Pancreas (tissue), 10 donors: ENCODE measurements at regions of chr7 and their contacts with region 1.

Region 1: DNA sequence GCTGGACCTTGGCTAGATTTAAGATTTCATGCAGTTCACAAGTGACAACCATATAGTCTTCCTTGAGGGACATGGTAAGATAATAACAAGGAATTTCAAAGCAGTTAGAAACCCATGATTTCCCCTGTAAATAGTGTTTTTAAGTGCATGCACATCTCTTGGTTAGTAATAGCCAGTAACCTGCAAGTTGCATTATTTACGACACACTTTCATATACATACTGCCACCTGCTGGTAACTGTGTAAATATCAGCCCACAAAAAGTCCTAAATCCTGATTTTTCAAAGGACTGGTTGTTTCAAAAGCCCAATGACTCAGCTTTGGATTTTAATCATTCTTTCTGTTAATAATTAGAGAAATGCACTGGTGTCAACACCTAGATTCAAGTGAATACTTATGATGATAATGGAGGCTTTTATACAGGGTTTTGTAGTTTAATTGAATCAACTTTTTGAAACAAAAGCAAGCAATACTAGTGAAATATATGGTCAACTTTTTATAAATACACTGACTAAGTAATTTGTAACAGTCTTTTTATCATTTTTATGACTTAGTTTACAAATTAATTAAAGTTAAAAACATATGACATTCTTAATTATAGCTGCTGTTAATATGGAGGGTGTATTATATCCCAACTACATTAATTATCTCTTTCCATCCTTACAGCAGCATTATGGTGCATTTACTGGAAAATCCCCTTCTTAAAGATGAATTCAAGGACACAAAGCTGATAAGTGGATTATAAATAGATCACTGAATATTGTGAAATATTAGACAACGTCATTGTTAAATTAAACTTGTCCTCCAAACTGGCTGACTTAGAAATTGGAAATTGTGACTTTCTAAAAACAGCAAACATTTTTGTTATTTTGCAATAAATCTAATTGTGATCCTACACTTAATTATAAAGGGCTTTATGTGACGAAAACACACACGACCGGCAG is 367.7 kb upstream of the SEMA3D start:
- DNase-seq: peak in 3 of 6 donors; percentile 6 to 36 (median 11)
- ATAC-seq: peak; percentile 61 to 95 (median 89)
- H3K4me3 ChIP-seq: no peak overlapping the region
- H3K27ac ChIP-seq: peak overlapping the region in 1 of 4 donors; percentile 3
- H3K4me1 ChIP-seq: no peaks in the 10 kb centered on the region
- H3K27me3 ChIP-seq: no peaks in the 10 kb centered on the region
- CTCF ChIP-seq: peak; percentile 56 to 70 (median 62)

Region 2: GRCh38 chr7:85030893-85031292 is 523.6 kb before region 1 on chr7:
- intact Hi-C with region 1: loop called in 1 of 3 experiments (anchors 10 kb)
- DNase-seq: no peak
- ATAC-seq: peak in 2 of 4 donors; percentile 40 to 57
- H3K4me3 ChIP-seq: no peak overlapping the region
- H3K27ac ChIP-seq: no peak overlapping the region
- H3K4me1 ChIP-seq: peaks cover 0 to 9% (median 7%) of the 10 kb centered on the region in 3 donors
- H3K27me3 ChIP-seq: peaks cover 0 to 7% (median 2%) of the 10 kb centered on the region in 4 donors
- CTCF ChIP-seq: peak in 3 of 4 donors; percentile 10 to 26 (median 12)

Region 3: DNA sequence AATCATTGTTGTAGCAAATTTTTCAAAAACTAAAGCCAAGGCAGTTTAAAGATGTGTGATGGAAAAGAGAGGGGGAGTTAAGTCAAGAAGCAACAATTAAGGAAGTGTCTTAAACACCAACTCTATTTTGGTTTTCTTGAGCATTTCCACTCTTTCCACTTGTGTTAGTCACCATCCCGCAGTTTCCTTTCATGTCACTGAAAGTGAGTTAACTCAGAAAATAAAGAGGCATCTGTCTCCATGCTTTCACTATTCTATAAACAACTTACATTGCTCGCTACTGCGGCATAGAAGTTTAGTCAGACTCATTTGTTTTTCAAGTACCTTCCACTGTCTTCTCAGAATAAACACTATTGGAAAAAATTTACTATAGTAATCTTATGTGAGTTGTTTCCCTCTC is 82.8 kb before region 1 on chr7:
- intact Hi-C with region 1: no loop called
- DNase-seq: no peak
- ATAC-seq: peak in 1 of 4 donors; percentile 15
- H3K4me3 ChIP-seq: no peak overlapping the region
- H3K27ac ChIP-seq: no peak overlapping the region
- H3K4me1 ChIP-seq: no peaks in the 10 kb centered on the region
- H3K27me3 ChIP-seq: no peaks in the 10 kb centered on the region
- CTCF ChIP-seq: no peak